Breast epithelium (tissue), 4 donors: ENCODE measurements at regions of chr1 and their contacts with region 1.

Region 1: DNA sequence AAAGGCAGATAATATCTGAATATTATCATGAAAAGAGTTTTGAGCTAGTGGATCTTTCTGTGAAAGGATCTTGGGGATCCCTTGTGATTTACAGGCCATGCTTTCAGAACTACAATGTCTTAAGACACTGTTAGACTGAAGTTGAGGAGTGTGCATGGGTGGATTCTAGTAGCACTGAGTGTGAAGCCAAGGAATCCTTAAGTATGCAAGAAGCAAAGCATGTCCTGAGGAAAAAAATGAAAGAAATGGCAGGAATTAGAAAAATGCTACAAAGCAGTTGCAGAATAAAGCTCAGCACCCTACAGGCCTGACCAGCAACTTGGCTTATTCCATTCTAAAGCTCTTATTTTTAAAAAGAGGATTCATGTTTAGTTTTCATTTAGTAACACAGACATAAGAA is 11.9 kb downstream of the STX6 start:
- DNase-seq: no peak
- H3K4me3 ChIP-seq: no peak overlapping the region
- H3K27ac ChIP-seq: no peak overlapping the region
- H3K4me1 ChIP-seq: peaks cover 0 to 2% of the 10 kb centered on the region in 2 donors
- H3K27me3 ChIP-seq: no peaks in the 10 kb centered on the region
- CTCF ChIP-seq: no peak
- POLR2A ChIP-seq: no peak

Region 2: GRCh38 chr1:181023265-181024057 is 12.7 kb after region 1 on chr1:
- intact Hi-C with region 1: no loop called
- DNase-seq: no peak
- H3K4me3 ChIP-seq: peak overlapping the region; percentile 3 to 94 (median 89)
- H3K27ac ChIP-seq: peak overlapping the region; percentile 85 to 95
- H3K4me1 ChIP-seq: peaks cover 0 to 5% of the 10 kb centered on the region in 2 donors
- H3K27me3 ChIP-seq: peaks cover 0 to 3% of the 10 kb centered on the region in 2 donors
- CTCF ChIP-seq: no peak
- POLR2A ChIP-seq: no peak

Region 3: DNA sequence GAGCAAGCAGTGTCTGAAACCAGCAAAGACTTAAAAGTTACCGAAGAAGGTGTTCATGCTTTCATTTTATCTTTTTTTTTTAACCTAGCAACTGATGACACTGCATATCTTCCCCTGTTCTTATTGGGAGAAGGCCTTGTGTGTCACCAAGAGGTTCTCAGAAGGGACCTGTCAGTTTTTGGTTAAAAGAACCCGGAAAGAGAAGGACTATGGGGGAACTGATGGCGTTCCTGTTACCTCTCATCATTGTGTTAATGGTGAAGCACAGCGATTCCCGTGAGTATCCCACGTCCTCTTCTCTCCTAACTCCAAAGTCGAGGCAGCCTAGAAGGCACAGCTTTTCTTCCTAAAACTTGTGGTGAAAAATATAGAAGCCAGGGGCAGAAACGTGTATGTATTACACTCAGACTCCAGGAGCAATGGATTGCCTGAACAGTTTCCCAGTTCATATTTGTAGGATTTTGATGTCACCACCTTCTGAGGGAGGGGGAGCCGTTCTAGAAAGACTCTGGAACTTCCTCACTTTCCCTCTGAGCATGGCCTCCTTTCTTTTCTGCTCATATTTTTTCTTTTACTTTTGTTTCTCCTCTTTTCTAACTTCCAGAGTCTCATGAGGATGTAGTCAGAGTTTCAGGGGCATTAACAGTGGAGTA is 23.1 kb after region 1 on chr1 and contains the start of gene MR1:
- intact Hi-C with region 1: loop called (anchors 2 kb)
- DNase-seq: no peak
- H3K4me3 ChIP-seq: peak within 1 kb of the TSS; percentile 45 to 69 (median 54)
- H3K27ac ChIP-seq: peak within 1 kb of the TSS; percentile 97
- H3K4me1 ChIP-seq: peaks cover 8 to 9% of the 10 kb centered on the region in 2 donors
- H3K27me3 ChIP-seq: no peaks in the 10 kb centered on the region
- CTCF ChIP-seq: no peak
- POLR2A ChIP-seq: no peak
- total RNA-seq, gene MR1: 12.8 to 23.4 (median 15.2) TPM